HEK293 (cell line): ENCODE measurements at regions of chr22 and their contacts with region 1.

Region 1: DNA sequence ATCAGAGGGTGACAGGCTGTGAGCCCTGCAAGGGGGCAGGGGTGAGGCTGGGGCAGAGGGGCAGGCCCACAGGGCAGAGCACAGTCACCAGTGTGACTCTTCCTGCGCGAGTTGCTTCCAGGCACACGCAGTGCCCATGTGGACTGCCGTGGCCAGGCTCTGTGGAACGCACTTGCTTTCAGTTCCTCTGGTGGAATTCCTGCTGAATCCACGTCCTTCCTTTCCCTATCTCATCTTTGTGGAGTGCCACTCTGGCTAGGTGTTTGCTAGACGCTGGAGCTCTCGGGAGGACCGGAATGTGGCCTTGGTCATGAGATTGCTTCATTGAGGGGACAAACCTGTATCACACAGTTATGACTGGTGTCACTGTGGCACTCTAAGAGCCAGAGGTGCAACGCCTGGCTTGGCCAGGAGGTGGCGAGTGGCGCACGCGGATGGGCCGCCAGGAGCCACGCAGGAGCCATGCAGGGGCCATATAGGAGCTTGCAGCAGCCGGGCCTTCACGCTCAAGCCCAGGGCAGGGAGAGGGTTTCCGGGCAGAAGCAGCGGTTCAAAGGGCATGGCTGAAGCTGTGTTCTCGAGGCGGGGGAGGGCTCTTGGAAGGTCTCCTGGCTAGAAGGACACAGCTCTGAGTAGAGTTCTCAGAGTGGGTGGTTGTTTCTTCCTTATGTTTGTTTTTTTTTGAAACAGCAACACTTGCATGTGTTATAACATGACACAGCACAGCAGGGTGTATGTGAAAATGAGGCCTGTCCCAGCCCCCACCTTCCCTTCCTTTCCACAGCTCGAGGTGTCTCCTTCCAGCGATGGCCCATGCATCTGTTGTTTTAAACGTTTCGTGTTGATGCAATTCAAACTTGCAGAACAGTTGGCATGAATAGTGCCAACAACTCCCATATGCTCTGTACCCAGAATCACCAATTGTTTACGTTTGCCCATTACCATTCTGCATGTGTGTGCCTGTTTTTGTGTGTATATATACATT is 36.2 kb downstream of the TBC1D22A start:
- H3K4me3 ChIP-seq: no peak overlapping the region
- H3K27ac ChIP-seq: no peak overlapping the region
- H3K4me1 ChIP-seq: 0 out of 2 replicates have a peak, but pooled peaks cover 2% of the 10 kb centered on the region
- CTCF ChIP-seq: peak; percentile 89

Region 2: DNA sequence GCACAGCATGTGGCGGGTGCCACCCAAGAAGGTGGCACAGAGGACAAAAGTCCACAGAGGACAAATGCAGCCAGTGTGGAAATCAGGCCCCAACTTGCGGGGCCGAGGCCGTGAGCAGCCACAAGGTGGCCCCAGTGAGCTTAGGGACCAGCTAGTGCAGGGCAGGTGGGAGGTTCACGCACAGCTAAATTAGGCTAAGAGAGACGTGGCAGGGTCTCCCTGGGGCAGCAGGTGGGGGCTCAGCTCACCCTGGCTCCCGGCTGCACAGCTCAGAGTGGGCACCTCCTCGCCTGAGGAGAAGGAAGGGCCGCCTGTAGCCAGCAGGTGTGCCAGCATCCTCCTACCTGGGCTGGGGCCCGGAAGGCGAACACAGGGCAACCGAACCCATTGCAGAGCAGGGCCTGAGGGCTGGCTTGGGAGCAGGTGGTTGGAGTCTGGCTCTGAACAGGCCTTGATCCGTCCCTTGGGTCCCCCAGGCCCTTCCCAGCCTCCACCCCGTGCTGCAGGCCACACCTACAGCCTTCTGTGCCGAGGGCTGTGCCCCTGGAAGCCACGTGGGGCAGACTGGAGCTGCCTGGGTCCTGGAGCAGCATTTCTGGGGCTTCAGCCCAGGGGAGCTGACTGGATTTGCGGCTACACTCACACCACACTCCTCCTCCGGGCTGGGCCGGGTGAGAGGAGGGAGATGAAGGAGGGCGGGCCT is 235.1 kb before region 1 on chr22:
- CTCF ChIA-PET with region 1: interaction called, 31 read pairs
- POLR2A ChIA-PET with region 1: no interaction called
- H3K4me3 ChIP-seq: no peak overlapping the region
- H3K27ac ChIP-seq: no peak overlapping the region
- H3K4me1 ChIP-seq: no peaks in the 10 kb centered on the region
- CTCF ChIP-seq: peak; percentile 63

Region 3: GRCh38 chr22:46762238-46763050 is 36.2 kb before region 1 on chr22 and contains the start of gene TBC1D22A:
- CTCF ChIA-PET with region 1: interaction called, 223 read pairs
- POLR2A ChIA-PET with region 1: interaction called, 24 read pairs
- H3K4me3 ChIP-seq: peak within 1 kb of the TSS; percentile 77
- H3K27ac ChIP-seq: peak within 1 kb of the TSS; percentile 91
- H3K4me1 ChIP-seq: peaks cover 3% of the 10 kb centered on the region; the same call in 1 of the 2 replicates
- CTCF ChIP-seq: peak; percentile 69; the same call in 1 of the 2 replicates

Region 4: GRCh38 chr22:46780453-46780852 is 18.2 kb before region 1 on chr22:
- CTCF ChIA-PET with region 1: interaction called, 30 read pairs
- POLR2A ChIA-PET with region 1: no interaction called
- H3K4me3 ChIP-seq: no peak overlapping the region
- H3K27ac ChIP-seq: no peak overlapping the region
- H3K4me1 ChIP-seq: peaks cover 15% of the 10 kb centered on the region
- CTCF ChIP-seq: no peak

Region 5: GRCh38 chr22:46827136-46827780 is 28.6 kb after region 1 on chr22:
- CTCF ChIA-PET with region 1: interaction called, 21 read pairs
- POLR2A ChIA-PET with region 1: no interaction called
- H3K4me3 ChIP-seq: no peak overlapping the region
- H3K27ac ChIP-seq: no peak overlapping the region
- H3K4me1 ChIP-seq: peaks cover 25% of the 10 kb centered on the region
- CTCF ChIP-seq: no peak

Region 6: GRCh38 chr22:47110791-47111443 is 312.3 kb after region 1 on chr22:
- CTCF ChIA-PET with region 1: no interaction called
- POLR2A ChIA-PET with region 1: no interaction called
- H3K4me3 ChIP-seq: no peak overlapping the region
- H3K27ac ChIP-seq: no peak overlapping the region
- H3K4me1 ChIP-seq: no peaks in the 10 kb centered on the region
- CTCF ChIP-seq: no peak